Breast epithelium (tissue), 4 donors: ENCODE measurements at regions of chr6 and their contacts with region 1.

Region 1: GRCh38 chr6:125961117-125961516 is 4.5 kb downstream of the HINT3 start:
- DNase-seq: no peak
- H3K4me3 ChIP-seq: no peak overlapping the region
- H3K27ac ChIP-seq: peak overlapping the region; percentile 40 to 98
- H3K4me1 ChIP-seq: peaks cover 0 to 6% of the 10 kb centered on the region in 2 donors
- H3K27me3 ChIP-seq: no peaks in the 10 kb centered on the region
- CTCF ChIP-seq: no peak
- POLR2A ChIP-seq: no peak

Region 2: DNA sequence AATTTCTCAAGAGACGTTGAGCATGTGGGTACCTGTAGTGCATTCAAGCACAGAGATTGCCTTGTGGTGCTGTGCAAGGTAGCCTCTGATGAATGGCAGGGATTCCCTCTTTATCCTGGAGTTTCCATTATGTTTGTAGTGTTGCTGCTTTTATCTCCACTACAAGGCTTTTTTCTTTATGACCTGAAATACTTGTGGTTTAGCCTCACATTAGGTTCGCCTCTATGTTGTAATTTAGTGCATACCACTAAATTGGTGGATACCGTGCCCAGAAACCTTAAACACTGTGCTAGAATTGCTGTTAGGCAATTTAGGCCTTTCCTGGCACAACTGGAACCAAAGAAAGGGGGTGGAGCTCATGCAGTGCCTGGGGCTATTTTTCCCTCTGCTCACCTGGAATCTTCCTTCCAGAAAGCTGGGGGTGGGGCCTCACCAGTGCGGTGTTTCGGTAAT is 93.6 kb before region 1 on chr6:
- intact Hi-C with region 1: loop called (anchors 5 kb)
- DNase-seq: peak; percentile 67 to 89
- H3K4me3 ChIP-seq: no peak overlapping the region
- H3K27ac ChIP-seq: peak overlapping the region; percentile 56 to 71
- H3K4me1 ChIP-seq: peaks cover 0 to 3% of the 10 kb centered on the region in 2 donors
- H3K27me3 ChIP-seq: no peaks in the 10 kb centered on the region
- CTCF ChIP-seq: no peak
- POLR2A ChIP-seq: no peak